Aorta (tissue), 5 donors: ENCODE measurements at regions of chr6 and their contacts with region 1.

Region 1: DNA sequence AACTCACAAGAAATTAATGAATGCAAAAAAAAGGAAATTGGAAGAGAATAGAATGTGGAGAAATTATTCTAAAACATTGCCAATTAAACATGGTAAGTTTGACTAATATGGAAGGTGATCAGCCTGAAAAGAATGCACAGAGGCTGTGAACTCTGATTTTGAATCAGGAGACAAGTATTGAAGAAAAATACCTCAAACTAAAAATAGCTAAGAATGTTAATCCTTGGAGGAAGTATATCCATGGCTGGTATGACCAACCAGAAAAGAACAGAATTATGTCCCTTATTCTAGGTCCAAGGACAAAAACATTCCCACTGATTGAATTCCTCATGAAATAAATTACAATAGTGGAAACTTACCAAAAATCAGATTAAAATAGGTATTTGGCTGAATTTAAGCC is 7.3 kb upstream of the RIMS1 start:
- DNase-seq: no peak
- ATAC-seq: no peak
- H3K4me3 ChIP-seq: no peak overlapping the region
- H3K27ac ChIP-seq: no peak overlapping the region
- H3K4me1 ChIP-seq: no peaks in the 10 kb centered on the region
- H3K27me3 ChIP-seq: no peaks in the 10 kb centered on the region

Region 2: DNA sequence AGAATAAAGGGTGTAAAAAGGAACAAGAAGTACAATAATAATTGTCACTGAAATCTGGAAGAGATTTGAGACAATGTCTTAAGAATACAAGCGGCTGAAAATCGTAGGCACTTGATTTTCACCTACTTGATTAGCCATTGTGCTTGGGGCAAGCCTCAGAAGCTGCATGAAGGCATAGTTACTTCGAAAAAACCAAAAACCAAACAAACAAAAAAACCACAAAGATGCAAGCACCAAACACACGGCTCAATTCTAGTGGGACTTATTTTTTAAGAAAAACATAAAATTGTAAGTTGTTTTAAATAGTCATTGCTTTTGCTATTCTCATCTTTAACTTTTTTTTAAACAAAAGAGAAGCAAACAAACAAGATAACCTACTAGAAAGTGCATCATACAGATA is 354.8 kb before region 1 on chr6:
- intact Hi-C with region 1: no loop called
- DNase-seq: no peak
- ATAC-seq: no peak
- H3K4me3 ChIP-seq: no peak overlapping the region
- H3K27ac ChIP-seq: no peak overlapping the region
- H3K4me1 ChIP-seq: peaks cover 0 to 1% of the 10 kb centered on the region in 2 donors
- H3K27me3 ChIP-seq: no peaks in the 10 kb centered on the region

Region 3: GRCh38 chr6:71721642-71722041 is 157.4 kb before region 1 on chr6:
- intact Hi-C with region 1: loop called in 1 of 2 experiments (anchors 5 kb)
- DNase-seq: peak in 1 of 2 donors; percentile 50
- ATAC-seq: peak; percentile 70
- H3K4me3 ChIP-seq: no peak overlapping the region
- H3K27ac ChIP-seq: no peak overlapping the region
- H3K4me1 ChIP-seq: no peaks in the 10 kb centered on the region
- H3K27me3 ChIP-seq: no peaks in the 10 kb centered on the region

Region 4: DNA sequence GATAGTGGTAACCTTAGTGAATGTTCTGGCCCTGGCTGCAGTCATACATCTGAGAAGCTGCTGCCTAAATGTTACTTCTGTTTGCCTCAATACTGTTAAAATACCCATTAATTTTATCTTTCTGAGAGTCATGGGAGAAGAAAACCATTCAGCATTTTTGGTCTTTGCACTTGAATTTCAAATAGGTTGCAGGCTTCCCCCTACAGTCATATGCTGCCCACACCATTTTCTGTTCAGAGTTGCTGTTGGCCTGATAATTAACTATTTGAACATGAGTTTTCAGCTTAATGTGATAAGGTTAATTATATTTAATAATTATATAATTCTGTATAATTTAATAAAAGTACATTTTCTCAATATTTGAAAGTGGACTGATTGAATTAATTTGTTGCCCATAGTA is 417.4 kb after region 1 on chr6:
- intact Hi-C with region 1: no loop called
- DNase-seq: no peak
- ATAC-seq: no peak
- H3K4me3 ChIP-seq: no peak overlapping the region
- H3K27ac ChIP-seq: no peak overlapping the region
- H3K4me1 ChIP-seq: no peaks in the 10 kb centered on the region
- H3K27me3 ChIP-seq: no peaks in the 10 kb centered on the region